ENCODE measurements at regions of chr15 and their contacts with region 1.

Region 1: GRCh38 chr15:90387537-90388461 is at the start of gene IQGAP1:
- DNase-seq: peak; percentile 96
- H3K4me3 Mint-ChIP-seq: peak within 1 kb of the TSS; percentile 94
- H3K27ac Mint-ChIP-seq: peak within 1 kb of the TSS; percentile 96
- H3K4me1 Mint-ChIP-seq: peaks cover 43% of the 10 kb centered on the region
- H3K27me3 Mint-ChIP-seq: no peaks in the 10 kb centered on the region
- total RNA-seq, gene IQGAP1: 144 and 149 TPM in 2 replicates

Region 2: DNA sequence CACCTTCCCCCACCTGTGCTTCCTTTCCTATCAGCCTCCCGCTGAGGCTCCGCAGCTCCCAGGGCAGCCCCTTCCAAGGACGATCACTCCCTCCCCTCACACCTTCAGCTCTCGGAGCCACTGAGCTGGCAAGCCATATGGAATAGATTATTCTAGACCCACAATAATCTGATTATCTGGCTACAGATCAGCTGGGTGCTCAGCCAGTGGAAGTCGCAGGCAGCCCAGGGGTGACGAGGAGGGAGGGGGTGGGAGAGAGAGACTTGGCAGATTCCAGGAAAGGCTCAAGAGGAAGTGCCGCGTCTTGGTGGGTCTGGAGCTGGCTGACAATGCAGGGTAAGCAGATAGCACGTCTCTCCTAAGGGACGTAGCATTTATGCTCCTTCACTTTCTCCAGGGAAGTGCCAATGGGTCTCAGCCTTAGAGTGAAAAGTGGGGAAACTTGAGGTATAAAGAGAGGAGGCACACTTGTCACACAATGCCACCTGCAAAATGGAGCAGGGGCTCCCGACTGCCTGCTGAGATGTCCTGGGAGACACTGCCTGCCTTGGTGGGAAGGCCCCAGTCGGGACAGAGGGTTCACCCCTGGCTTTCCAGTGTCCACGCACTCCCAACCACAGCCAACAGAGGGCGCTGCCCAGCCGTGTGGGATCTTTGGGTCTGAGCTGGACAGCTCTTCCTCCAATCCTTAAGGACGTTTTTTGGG is 627.3 kb before region 1 on chr15:
- intact Hi-C with region 1: no loop called
- DNase-seq: peak; percentile 53
- H3K4me3 Mint-ChIP-seq: no peak overlapping the region
- H3K27ac Mint-ChIP-seq: no peak overlapping the region
- H3K4me1 Mint-ChIP-seq: no peaks in the 10 kb centered on the region
- H3K27me3 Mint-ChIP-seq: peaks cover 13% of the 10 kb centered on the region

Region 3: GRCh38 chr15:90352109-90352893 is 35.5 kb before region 1 on chr15 and contains the start of gene ZNF774:
- intact Hi-C with region 1: loop called (anchors 1 kb)
- DNase-seq: peak; percentile 88
- H3K4me3 Mint-ChIP-seq: peak within 1 kb of the TSS; percentile 90
- H3K27ac Mint-ChIP-seq: peak within 1 kb of the TSS; percentile 85
- H3K4me1 Mint-ChIP-seq: peaks cover 10% of the 10 kb centered on the region
- H3K27me3 Mint-ChIP-seq: no peaks in the 10 kb centered on the region
- total RNA-seq, gene ZNF774: 1.6 and 2.1 TPM in 2 replicates

Region 4: DNA sequence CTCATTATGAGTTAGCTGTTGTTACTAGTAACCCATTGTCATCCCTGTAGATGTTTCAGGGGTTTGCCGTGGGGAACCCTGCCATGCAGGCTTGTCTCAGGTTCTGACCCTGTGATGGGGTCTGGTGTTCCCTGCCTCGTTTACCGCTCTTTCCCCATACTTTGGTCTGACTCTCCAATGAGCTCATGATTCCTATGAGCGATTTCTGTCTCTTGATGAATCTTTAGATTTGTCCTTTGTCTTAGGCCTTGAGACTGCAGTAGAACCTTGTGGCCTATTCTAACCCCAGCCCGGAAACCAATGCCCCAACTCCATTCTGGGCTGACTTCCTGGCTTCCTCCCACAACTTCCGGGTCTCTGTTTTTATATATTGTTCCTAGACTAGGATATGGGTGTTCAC is 11.0 kb before region 1 on chr15:
- intact Hi-C with region 1: loop called (anchors 1 kb)
- DNase-seq: peak; percentile 65
- H3K4me3 Mint-ChIP-seq: peak overlapping the region; percentile 61
- H3K27ac Mint-ChIP-seq: peak overlapping the region; percentile 97
- H3K4me1 Mint-ChIP-seq: peaks cover 42% of the 10 kb centered on the region
- H3K27me3 Mint-ChIP-seq: no peaks in the 10 kb centered on the region

Region 5: DNA sequence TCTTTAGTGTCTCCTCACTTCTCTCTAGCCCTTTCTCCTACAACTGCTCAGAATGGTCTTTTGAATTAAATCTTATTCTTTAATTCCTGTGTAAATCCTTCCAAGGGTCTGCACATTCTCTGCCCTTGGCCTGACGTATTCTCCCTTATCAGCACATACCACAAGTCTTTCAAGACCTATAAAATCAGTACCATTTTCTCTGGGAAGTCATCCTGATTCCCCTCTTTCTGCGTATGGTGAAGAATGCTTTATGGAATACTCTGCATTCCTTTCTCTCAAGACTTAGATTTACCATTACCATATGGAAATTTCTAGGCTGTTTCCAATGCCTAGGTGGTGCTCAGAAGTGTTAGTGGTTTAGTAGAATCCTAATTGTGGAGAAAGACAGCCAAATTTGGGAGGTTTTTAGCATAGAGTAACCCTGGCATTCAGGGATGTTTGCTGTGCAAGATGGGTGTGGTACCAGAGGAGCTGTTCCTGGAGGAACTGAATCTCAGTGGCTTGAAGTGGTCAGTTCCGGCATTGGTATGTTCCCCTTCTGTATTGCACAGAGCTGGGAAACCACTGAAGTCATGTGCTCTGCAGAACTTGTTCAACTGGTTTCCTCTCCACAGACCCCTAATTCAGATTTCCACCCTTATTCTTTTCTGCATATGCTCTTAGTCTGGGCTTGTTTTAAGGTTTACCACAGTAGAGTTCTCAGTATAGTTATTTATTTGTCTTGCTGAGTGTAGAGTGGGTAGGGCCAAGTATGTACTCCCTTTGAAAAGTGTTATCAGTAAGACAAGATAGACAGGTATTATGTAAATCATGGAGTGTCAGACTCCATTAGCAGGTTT is 24.8 kb after region 1 on chr15:
- intact Hi-C with region 1: loop called (anchors 2 kb)
- DNase-seq: no peak
- H3K4me3 Mint-ChIP-seq: peak overlapping the region; percentile 13
- H3K27ac Mint-ChIP-seq: peak overlapping the region; percentile 74
- H3K4me1 Mint-ChIP-seq: peaks cover 79% of the 10 kb centered on the region
- H3K27me3 Mint-ChIP-seq: no peaks in the 10 kb centered on the region

Region 6: GRCh38 chr15:90497912-90498311 is 110.1 kb after region 1 on chr15:
- intact Hi-C with region 1: no loop called
- DNase-seq: no peak
- H3K4me3 Mint-ChIP-seq: no peak overlapping the region
- H3K27ac Mint-ChIP-seq: peak overlapping the region; percentile 14
- H3K4me1 Mint-ChIP-seq: peaks cover 17% of the 10 kb centered on the region
- H3K27me3 Mint-ChIP-seq: no peaks in the 10 kb centered on the region

Region 7: DNA sequence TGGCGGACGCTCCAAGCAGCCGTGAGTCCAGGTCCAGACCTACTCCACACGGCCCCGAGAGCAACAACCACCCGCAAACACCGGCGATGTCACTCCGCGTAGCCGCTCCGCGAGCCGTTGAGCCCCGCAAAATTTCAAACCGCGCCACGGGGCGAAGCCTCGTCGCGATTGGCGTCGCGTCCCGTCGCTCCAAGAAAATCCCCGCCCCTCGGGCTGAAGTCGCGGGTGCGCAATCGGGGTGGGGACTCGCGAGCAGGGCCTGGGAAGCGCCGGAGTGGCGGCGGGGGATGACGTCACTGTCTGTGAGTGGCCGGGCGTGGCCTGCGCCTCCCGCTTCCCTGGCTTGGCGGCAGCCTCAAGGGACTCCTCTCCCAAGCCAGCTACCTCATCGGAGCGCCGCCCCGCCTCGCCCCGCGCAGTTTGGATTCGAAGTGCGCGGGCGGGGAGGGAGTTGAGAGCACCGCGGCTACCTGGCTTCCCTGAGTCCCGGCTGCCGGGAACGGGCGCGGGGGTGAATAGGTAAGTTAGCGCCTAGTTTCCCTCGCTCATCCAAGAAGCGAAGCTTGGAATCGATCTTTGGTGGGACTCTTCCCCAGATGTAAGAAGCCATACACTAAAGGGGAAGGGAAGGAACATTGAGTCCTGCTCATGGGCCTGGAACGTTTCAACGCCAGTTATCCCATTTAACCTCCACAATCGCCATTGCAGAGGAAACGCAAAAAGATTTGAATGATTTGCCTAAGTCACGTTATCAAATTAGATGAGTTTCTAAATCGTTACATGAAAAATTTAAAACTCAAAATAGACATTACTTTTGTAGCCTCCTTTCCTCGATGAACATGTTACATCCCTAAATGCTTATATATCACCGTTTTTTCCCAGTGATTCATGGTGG is 606.9 kb after region 1 on chr15 and contains the start of gene PRC1:
- intact Hi-C with region 1: loop called (anchors 1 kb)
- DNase-seq: peak; percentile 99
- H3K4me3 Mint-ChIP-seq: peak within 1 kb of the TSS; percentile 100
- H3K27ac Mint-ChIP-seq: peak within 1 kb of the TSS; percentile 100
- H3K4me1 Mint-ChIP-seq: peaks cover 42% of the 10 kb centered on the region
- H3K27me3 Mint-ChIP-seq: no peaks in the 10 kb centered on the region
- total RNA-seq, gene PRC1: 78.4 and 86.0 TPM in 2 replicates